ENCODE measurements at regions of chr10 and their contacts with region 1.

Region 1: GRCh38 chr10:73060738-73061635 is 35.7 kb downstream of the P4HA1 start:
- DNase-seq: peak; percentile 59
- H3K4me3 ChIP-seq: no peak overlapping the region
- H3K27ac ChIP-seq: no peak overlapping the region
- H3K4me1 ChIP-seq: peaks cover 9% of the 10 kb centered on the region
- H3K27me3 ChIP-seq: no peaks in the 10 kb centered on the region
- CTCF ChIP-seq: peak in 1 of 2 donors; percentile 40
- POLR2A ChIP-seq: no peak

Region 2: DNA sequence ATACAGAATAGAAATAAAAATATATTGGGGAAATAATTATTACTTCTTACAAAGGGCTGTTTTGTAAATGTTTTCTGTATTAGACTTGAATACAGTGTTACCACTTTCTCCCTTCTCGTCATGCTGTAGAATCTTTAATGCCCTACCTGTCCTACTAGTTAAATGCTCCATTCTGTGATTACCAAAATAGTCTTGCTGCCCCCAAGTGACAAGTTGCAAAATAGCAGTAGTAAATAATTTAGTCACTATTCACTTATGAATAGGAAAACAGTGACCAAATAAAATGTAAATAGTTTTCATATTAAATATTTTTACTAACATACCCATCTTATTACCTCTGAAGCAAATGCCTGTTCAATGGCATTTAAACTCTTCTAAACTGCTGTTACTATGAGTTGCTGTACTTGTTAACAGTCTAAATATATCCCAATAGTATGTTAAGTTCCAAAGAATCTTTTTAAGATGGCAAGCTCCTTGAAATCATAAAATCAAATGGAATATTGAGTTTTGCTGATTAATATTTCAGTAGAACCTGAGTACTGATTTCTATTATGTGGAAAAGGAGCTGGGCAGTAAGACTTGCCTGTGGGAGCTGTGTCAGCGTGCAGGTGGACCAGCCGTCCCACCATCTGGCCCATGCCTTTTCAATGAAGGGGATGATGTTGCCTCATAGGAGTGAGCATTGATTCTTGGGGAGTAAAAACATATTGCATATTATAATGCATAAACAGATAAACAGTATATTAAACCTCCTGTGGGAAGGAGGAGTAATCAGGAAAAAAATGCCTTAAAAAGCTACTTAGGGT is 185.5 kb before region 1 on chr10:
- CTCF ChIA-PET with region 1: interaction called, 5 read pairs
- POLR2A ChIA-PET with region 1: no interaction called
- dilution Hi-C with region 1: no loop called
- intact Hi-C with region 1: loop called (anchors 1 kb)
- DNase-seq: peak; percentile 66
- H3K4me3 ChIP-seq: no peak overlapping the region
- H3K27ac ChIP-seq: no peak overlapping the region
- H3K4me1 ChIP-seq: no peaks in the 10 kb centered on the region
- H3K27me3 ChIP-seq: no peaks in the 10 kb centered on the region
- CTCF ChIP-seq: peak; percentile 13 to 26
- POLR2A ChIP-seq: no peak

Region 3: GRCh38 chr10:73044378-73045285 is 16.4 kb before region 1 on chr10:
- CTCF ChIA-PET with region 1: interaction called, 13 read pairs
- POLR2A ChIA-PET with region 1: no interaction called
- dilution Hi-C with region 1: no loop called
- intact Hi-C with region 1: no loop called
- DNase-seq: peak; percentile 96
- H3K4me3 ChIP-seq: peak overlapping the region in 1 of 3 experiments; percentile 35
- H3K27ac ChIP-seq: peak overlapping the region; percentile 96
- H3K4me1 ChIP-seq: peaks cover 16% of the 10 kb centered on the region
- H3K27me3 ChIP-seq: no peaks in the 10 kb centered on the region
- CTCF ChIP-seq: no peak
- POLR2A ChIP-seq: no peak

Region 4: DNA sequence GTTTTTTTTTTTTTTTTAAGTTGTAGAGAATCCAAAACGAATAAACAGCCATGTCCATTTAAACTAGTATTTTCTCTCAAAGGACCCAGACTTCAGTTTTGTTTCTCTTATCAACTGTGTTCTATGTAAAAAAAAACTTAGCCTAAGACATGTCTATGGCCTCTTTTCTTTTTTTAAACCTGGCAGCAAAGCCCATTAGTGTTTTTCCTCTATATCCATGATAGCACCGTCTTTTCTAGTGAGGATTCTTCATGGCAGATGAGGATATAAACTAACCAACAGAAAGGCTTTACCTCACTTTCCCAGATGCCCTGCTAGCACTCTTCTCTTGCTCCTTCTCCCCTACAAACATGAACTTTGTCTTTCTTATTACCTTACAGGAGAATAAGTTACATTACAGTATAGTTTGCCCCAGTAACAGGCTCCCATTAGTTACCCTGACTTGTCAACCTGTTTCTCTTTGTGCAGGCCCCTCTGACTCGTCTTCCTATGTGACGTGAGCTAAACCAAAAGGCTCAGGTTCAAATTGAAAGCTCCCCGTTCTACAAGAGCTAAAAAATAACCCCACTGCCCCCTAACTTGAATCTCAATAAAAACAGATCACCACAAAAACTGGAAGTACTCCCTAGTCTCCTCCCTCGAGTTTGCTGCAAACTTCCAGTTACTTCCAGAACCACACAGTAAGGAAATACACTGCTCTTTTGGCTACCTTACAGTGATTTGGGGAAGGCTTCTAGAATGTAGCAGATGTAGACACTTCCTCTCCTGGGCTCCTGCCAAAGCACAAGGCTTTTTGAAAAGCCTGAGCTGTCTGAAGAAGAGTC is 15.6 kb after region 1 on chr10:
- CTCF ChIA-PET with region 1: interaction called, 10 read pairs
- POLR2A ChIA-PET with region 1: no interaction called
- dilution Hi-C with region 1: no loop called
- intact Hi-C with region 1: no loop called
- DNase-seq: peak; percentile 81
- H3K4me3 ChIP-seq: peak overlapping the region in 2 of 3 experiments; percentile 9 to 44
- H3K27ac ChIP-seq: peak overlapping the region; percentile 73
- H3K4me1 ChIP-seq: peaks cover 18% of the 10 kb centered on the region
- H3K27me3 ChIP-seq: no peaks in the 10 kb centered on the region
- CTCF ChIP-seq: no peak
- POLR2A ChIP-seq: no peak

Region 5: GRCh38 chr10:73306171-73306708 is 245.3 kb after region 1 on chr10:
- CTCF ChIA-PET with region 1: no interaction called
- POLR2A ChIA-PET with region 1: no interaction called
- dilution Hi-C with region 1: no loop called
- intact Hi-C with region 1: no loop called
- DNase-seq: no peak
- H3K4me3 ChIP-seq: no peak overlapping the region
- H3K27ac ChIP-seq: no peak overlapping the region
- H3K4me1 ChIP-seq: no peaks in the 10 kb centered on the region
- H3K27me3 ChIP-seq: peaks cover 2 to 3% of the 10 kb centered on the region in 2 experiments
- CTCF ChIP-seq: no peak
- POLR2A ChIP-seq: no peak